ENCODE measurements at regions of chr6 and their contacts with region 1.

Region 1: GRCh38 chr6:154156135-154156896 is 117.3 kb downstream of the OPRM1 start:
- DNase-seq: peak; percentile 70
- H3K4me3 ChIP-seq: no peak overlapping the region
- H3K27ac ChIP-seq: no peak overlapping the region
- H3K4me1 ChIP-seq: peaks cover 7% of the 10 kb centered on the region
- H3K27me3 ChIP-seq: no peaks in the 10 kb centered on the region
- CTCF ChIP-seq: peak; percentile 84

Region 2: DNA sequence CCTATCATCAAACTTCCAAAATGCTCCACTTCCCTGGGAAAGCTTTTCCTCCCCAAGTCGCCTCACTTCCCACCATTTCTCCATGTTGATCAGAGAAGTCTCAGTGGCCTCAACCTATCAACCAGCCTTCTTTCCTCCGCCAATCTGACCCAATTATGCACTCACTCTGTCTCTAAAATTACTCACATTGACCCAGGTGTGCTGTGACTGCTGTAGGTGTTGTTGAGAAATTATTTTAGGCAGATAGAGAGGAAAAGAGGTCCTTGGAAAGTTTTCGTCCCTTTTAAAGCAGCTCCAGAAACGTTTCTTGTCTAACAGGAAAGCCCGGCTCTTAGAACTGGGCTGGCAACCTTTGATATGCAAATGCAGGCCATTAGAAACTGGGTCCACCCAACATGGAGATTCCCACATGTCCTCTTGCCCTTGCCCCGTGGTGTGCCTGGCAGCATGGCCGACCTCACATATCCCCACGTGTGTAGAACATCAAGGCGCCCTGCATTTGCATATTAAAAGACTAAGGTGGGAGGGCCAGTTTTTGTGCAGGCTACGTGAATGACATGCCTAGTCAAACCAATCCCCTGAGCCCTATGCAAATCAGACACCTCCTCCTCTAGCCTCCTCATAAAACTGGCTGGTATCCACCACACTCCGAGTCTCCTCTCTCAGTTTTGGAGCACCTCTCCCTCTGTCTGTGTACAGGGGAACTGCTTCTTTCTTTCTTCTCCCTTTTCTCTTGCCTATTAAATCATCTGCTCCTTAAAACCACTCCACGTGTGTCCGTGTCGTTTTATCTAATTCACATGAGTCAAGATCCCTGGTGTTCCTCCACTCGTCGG is 187.4 kb after region 1 on chr6:
- CTCF ChIA-PET with region 1: no interaction called
- POLR2A ChIA-PET with region 1: no interaction called
- intact Hi-C with region 1: loop called (anchors 2 kb)
- DNase-seq: peak; percentile 94
- H3K4me3 ChIP-seq: no peak overlapping the region
- H3K27ac ChIP-seq: no peak overlapping the region
- H3K4me1 ChIP-seq: no peaks in the 10 kb centered on the region
- H3K27me3 ChIP-seq: no peaks in the 10 kb centered on the region
- CTCF ChIP-seq: peak; percentile 60

Region 3: DNA sequence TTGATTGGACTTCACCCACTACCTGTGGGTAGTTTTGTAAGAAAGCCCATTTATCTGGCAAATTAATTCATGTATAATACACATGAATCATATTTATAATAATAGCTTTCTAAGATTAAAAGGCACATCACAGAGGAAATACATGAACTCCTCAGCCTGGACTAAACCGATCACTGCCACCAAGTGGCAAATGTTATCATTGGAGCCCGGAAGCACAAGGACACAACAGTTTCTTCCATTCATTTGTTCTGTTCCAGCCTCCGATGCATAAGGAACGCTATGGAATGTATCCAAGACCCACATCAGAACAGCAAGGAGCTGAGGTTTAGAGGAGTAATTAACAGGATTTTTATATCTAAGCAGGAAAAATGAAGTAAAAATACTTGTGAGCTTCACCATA is 214.2 kb after region 1 on chr6:
- CTCF ChIA-PET with region 1: interaction called, 3 read pairs
- POLR2A ChIA-PET with region 1: no interaction called
- intact Hi-C with region 1: loop called (anchors 2 kb)
- DNase-seq: peak; percentile 47
- H3K4me3 ChIP-seq: no peak overlapping the region
- H3K27ac ChIP-seq: no peak overlapping the region
- H3K4me1 ChIP-seq: no peaks in the 10 kb centered on the region
- H3K27me3 ChIP-seq: no peaks in the 10 kb centered on the region
- CTCF ChIP-seq: peak; percentile 62

Region 4: GRCh38 chr6:154510143-154510905 is 354.0 kb after region 1 on chr6 and contains the start of gene CNKSR3:
- CTCF ChIA-PET with region 1: no interaction called
- POLR2A ChIA-PET with region 1: no interaction called
- intact Hi-C with region 1: loop called (anchors 10 kb)
- DNase-seq: peak; percentile 99
- H3K4me3 ChIP-seq: peak within 1 kb of the TSS; percentile 71
- H3K27ac ChIP-seq: peak within 1 kb of the TSS; percentile 84
- H3K4me1 ChIP-seq: peaks cover 38% of the 10 kb centered on the region
- H3K27me3 ChIP-seq: no peaks in the 10 kb centered on the region
- CTCF ChIP-seq: no peak
- total RNA-seq, gene CNKSR3: 10.3 and 10.5 TPM in 2 replicates

Region 5: GRCh38 chr6:154805288-154805911 is 649.1 kb after region 1 on chr6:
- CTCF ChIA-PET with region 1: no interaction called
- POLR2A ChIA-PET with region 1: no interaction called
- intact Hi-C with region 1: loop called (anchors 5 kb)
- DNase-seq: peak; percentile 61
- H3K4me3 ChIP-seq: no peak overlapping the region
- H3K27ac ChIP-seq: no peak overlapping the region
- H3K4me1 ChIP-seq: no peaks in the 10 kb centered on the region
- H3K27me3 ChIP-seq: no peaks in the 10 kb centered on the region
- CTCF ChIP-seq: peak; percentile 55